ENCODE measurements at regions of chr19 and their contacts with region 1.

Region 1: DNA sequence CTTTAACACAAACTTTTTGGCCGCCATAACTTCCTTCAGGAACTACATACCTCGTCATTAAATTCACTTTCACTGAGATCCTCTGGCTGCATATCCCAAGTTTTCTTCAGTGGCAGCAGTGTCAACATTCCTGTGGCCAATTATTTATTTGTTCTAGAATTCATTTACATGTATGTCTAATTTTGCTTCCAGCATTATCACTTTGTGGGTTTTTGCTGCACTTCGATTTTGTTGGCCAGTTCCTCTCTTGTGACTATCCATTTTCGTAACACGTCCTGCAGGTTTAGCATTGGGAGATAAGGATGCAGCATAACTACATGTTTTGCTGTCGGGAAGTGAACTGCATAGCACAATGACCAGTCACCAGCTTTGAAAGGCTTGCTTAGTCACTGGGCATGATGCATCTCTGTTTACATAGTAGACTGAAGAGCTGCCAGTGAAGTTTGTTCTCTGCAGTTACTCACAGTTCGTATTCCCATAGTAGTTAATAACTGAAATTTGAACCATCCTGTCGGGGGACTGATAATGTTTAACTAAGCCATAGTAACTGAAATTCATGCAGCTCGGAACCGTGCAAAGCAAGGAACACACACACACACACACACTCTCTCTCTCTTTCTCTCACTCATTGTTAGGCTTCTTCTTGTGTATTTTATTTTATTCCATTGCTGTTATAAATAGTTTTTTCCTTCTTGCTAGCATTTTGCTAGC is 28.3 kb downstream of the ZNF507 start:
- DNase-seq: no peak
- ATAC-seq: no peak
- H3K4me3 Mint-ChIP-seq: no peak overlapping the region
- H3K27ac Mint-ChIP-seq: no peak overlapping the region
- H3K4me1 Mint-ChIP-seq: no peaks in the 10 kb centered on the region
- H3K27me3 Mint-ChIP-seq: no peaks in the 10 kb centered on the region
- CTCF ChIP-seq: no peak

Region 2: DNA sequence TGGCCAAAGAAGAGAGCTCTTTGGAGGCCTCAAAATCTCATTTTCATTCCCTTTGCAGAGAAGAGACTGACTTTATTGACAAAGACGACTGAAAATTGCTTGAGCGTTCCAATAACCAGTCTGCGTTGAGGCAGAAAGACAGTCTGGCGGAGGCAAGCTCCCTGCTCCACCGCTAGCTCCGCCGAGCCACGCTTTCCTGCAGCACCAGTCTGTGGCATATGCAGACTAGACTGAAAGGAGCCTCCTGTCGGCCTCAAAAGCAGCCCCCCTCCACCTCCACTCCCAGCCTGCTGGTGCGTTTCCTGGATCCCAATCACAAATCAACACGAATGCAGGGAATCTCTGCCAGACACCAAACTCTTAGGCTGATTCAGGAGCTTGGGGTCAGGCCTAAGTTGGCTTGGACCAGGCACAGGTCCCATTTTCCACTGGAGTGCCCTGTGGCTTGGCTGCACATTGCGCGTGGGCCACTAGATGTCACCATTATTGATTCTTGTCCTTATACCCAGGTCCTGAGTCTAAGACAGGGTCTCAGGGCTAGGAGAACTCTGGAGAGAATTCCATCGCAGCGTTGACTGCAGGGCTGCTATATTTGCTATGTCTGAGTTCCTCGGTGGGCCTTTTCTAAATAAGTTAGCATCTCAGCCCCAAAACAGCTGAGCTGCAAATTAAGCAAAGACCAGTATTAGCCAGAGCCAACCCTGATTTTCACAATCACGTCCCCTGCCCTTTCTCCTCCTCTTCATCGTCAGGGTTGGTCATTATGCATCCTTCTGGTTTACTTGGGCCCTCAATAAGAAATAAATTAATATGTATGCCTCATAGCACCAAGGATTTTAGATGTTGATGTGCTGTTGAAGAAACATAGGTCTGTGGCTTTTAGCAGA is 33.5 kb before region 1 on chr19:
- CTCF ChIA-PET with region 1: interaction called, 3 read pairs
- POLR2A ChIA-PET with region 1: no interaction called
- intact Hi-C with region 1: loop called (anchors 1 kb)
- DNase-seq: peak; percentile 23
- ATAC-seq: peak; percentile 90
- H3K4me3 Mint-ChIP-seq: no peak overlapping the region
- H3K27ac Mint-ChIP-seq: no peak overlapping the region
- H3K4me1 Mint-ChIP-seq: no peaks in the 10 kb centered on the region
- H3K27me3 Mint-ChIP-seq: no peaks in the 10 kb centered on the region
- CTCF ChIP-seq: no peak